ENCODE measurements at regions of chr15 and their contacts with region 1.

Region 1: DNA sequence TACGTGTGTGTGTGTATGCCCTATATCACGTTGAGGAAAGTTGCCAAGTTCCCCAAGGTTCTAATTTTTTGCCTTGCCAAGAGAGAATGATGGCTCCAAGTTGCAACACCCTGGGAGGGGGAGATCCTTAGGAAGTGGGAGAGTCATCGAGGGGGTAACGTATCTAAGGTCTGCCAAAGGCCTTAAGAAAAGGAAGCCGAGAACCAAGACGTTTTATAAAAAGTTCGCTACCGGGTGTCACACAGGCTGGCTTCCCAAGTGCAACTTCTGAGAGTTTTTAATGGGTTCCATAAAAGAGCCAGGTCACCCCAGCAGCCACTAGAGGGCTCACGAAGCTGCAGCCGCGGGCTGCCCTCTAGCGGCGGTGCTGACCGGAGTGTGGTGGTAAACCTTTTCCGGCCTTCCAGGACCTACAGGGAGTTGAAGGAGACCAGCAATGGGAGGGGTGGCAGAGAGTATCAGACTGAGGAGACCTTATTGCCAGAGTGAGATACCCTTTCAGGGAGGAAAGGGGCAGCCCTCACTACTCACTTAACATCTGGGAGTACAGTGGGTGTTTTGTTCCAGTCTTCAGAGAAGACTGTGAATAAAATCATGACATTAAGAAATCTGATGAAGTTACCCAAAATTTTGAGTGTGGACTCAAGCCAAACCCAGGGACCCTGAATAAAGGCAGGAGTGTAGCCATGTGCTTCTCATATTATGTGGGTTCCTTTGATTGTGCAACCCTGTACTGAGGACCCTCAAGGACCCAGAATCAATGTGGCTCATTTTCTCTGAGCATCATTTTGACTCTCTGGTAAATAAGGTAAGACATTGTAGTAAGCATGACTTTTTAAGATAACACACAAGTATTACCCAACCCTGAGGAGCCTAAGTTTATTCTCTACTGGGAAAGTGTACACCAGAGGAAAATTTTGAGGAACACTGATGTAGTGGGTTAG is 2.5 kb upstream of the RFX7 start:
- DNase-seq: peak; percentile 86 to 92
- H3K4me3 ChIP-seq: peak overlapping the region; percentile 15; the same call in 1 of the 2 replicates
- H3K4me3 Mint-ChIP-seq: peak overlapping the region; percentile 82
- H3K27ac Mint-ChIP-seq: peak overlapping the region; percentile 19
- H3K4me1 ChIP-seq: peaks cover 31% of the 10 kb centered on the region
- H3K4me1 Mint-ChIP-seq: peaks cover 18% of the 10 kb centered on the region
- H3K27me3 ChIP-seq: no peaks in the 10 kb centered on the region
- H3K27me3 Mint-ChIP-seq: no peaks in the 10 kb centered on the region
- CTCF ChIP-seq: peak; percentile 100

Region 2: DNA sequence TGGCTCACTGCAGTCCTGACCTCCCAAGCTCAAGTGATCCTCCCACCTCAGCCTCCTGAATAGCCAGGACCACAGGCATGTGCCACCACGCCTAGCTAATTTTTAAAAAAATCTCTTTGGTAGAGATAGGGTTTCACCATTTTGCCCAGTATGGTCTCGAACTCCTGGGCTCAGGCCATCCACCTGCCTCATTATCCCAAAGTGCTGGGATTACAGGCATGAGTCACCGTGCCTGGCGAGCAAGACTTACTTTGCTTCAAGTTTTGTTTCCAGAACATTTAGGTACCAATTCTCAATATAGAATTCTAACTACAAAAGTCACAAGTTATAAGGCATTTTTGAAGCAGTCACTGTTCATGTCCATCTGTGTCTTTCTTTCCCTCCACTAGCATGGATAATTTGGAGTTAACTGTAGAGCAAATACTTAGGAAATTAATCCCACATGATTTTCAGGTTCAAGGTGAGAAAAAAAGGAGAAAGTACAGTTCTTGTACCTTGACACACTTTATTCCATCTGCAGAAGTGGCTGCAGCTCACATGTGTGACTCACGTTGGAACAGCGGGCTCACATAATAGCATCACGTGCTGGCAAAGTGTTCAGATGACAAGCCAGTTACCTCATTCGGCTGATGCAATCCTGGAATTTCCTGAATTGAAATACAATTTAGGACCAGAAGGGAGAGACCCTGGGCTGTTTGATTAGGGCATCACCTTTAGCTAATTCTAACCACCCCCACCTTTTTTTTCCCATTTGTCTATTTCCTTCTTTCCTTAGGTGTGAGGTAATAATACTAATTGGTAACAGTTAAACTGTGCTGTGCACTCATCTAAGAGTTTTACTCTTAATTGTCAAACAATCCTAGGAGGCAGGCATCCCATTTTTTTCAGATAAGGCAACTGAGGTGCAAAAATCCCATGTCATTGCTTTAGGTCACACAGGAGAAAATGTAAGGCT is 205.8 kb before region 1 on chr15:
- CTCF ChIA-PET with region 1: interaction called, 3 read pairs
- POLR2A ChIA-PET with region 1: no interaction called
- intact Hi-C with region 1: loop called (anchors 5 kb)
- DNase-seq: peak; percentile 85 to 88
- H3K4me3 ChIP-seq: no peak overlapping the region
- H3K4me3 Mint-ChIP-seq: peak overlapping the region; percentile 33
- H3K27ac Mint-ChIP-seq: peak overlapping the region; percentile 91
- H3K4me1 ChIP-seq: peaks cover 90% of the 10 kb centered on the region
- H3K4me1 Mint-ChIP-seq: peaks cover 63% of the 10 kb centered on the region
- H3K27me3 ChIP-seq: no peaks in the 10 kb centered on the region
- H3K27me3 Mint-ChIP-seq: no peaks in the 10 kb centered on the region
- CTCF ChIP-seq: no peak

Region 3: DNA sequence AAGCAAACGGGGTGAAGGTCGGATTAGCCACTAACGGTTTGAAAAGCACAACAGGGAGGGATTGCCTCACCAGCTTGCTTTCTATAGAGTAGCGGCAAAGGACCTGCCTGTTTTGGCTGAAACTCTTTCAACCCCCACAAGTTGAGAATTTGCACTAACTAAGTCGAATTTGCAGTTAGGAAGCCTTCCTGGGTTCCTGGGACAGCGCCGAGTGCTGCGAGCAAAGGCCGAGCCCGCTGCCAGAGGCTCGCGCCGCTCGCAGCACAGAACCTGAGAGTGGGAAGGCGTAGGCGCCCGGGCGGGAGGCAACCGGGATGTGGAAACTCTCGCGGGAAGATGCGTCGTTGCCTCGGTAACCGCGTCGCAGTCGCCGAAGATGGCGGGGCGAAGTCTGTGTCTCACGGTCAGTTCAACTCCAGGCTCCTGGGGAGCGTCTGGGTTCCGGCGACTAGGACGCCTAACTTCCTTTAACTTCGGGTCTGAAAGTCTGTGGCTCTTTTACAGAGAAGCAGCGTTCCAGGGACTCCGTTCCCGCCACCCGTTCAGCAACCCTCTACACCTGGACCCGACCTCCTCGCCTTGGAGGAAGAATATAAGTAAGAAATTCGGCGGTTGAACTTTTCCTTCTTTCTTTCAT is 119.0 kb after region 1 on chr15 and contains the start of gene TEX9:
- CTCF ChIA-PET with region 1: no interaction called
- POLR2A ChIA-PET with region 1: no interaction called
- intact Hi-C with region 1: loop called (anchors 2 kb)
- DNase-seq: peak; percentile 87 to 88
- H3K4me3 ChIP-seq: peak within 1 kb of the TSS; percentile 52
- H3K4me3 Mint-ChIP-seq: peak within 1 kb of the TSS; percentile 68
- H3K27ac Mint-ChIP-seq: no peak within 1 kb of the TSS
- H3K4me1 ChIP-seq: no peaks in the 10 kb centered on the region
- H3K4me1 Mint-ChIP-seq: peaks cover 8% of the 10 kb centered on the region
- H3K27me3 ChIP-seq: no peaks in the 10 kb centered on the region
- H3K27me3 Mint-ChIP-seq: peaks cover 12% of the 10 kb centered on the region
- CTCF ChIP-seq: no peak
- total RNA-seq, gene TEX9: 1.0 and 1.9 TPM in 2 replicates

Region 4: DNA sequence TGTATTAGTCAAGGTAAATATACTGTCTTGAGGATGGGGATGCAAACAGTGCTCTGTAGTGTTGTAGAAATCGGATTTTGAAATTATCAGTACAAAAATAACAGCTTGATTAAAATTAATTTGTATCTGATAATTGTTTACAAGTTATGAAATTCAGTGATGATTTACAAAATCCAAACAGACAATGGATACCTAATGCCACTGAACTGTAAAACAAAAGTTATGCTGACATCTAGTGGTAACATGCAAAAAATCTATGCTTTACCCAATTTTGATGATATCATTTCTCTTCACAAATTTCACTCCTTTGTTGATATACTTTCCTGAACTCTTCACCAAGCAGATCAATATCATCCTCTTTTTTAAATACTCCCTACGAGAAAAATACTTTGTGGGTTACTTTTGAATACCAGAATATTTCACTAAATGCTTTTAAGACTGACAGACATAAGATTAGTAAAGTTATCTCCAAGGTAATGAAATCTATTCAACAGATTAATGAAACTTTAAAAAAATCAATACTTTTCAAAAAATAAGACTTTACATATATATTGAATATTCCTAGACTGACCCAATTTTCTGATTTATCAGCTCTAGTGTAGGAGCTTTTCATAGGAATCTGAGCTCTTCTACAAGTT is 182.8 kb after region 1 on chr15:
- CTCF ChIA-PET with region 1: interaction called, 3 read pairs
- POLR2A ChIA-PET with region 1: no interaction called
- intact Hi-C with region 1: loop called (anchors 1 kb)
- DNase-seq: peak in 1 of 2 experiments; percentile 4
- H3K4me3 ChIP-seq: no peak overlapping the region
- H3K4me3 Mint-ChIP-seq: no peak overlapping the region
- H3K27ac Mint-ChIP-seq: no peak overlapping the region
- H3K4me1 ChIP-seq: no peaks in the 10 kb centered on the region
- H3K4me1 Mint-ChIP-seq: no peaks in the 10 kb centered on the region
- H3K27me3 ChIP-seq: no peaks in the 10 kb centered on the region
- H3K27me3 Mint-ChIP-seq: no peaks in the 10 kb centered on the region
- CTCF ChIP-seq: peak; percentile 35 to 41

Measured in Caco-2 (cell line).